ENCODE measurements at regions of chr5 and their contacts with region 1.

Region 1: DNA sequence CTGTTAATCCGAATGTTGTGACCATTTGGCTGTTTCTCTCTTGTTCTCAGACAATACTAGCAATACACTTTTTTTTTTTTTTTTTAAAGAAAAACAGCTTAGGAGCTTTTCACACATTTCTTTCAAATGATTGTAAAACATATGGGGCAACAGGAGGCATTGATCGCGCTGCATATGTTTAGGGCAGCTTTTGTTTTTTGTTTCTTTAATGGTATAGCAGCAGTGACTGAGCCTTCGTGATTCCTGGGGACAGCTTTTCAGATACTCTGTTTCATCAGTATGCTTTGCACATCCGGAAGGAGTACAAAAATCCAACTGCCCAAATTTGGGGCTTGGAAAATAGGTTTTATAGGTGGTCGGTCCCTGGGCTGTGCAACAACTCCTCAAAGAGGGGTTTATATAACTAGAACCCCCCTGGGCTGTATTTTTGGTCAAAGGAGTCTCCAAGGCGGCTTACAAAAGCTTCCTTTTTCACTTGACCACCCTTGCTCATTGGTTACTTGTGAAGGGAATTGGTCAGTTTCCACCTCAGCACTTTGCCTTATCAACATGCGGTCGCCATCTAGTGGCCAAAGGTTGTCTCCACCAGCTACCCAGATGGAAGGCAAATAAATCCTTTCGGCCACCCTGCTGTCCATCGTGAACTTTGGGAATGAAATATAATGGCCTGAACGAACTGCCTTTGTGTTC is 91.8 kb downstream of the PDE6A start:
- DNase-seq: peak; percentile 55
- ATAC-seq: peak; percentile 39
- H3K4me3 ChIP-seq: no peak overlapping the region
- H3K4me3 Mint-ChIP-seq: no peak overlapping the region
- H3K27ac ChIP-seq: no peak overlapping the region
- H3K27ac Mint-ChIP-seq: no peak overlapping the region
- H3K4me1 ChIP-seq: no peaks in the 10 kb centered on the region
- H3K4me1 Mint-ChIP-seq: no peaks in the 10 kb centered on the region
- H3K27me3 ChIP-seq: no peaks in the 10 kb centered on the region
- H3K27me3 Mint-ChIP-seq: no peaks in the 10 kb centered on the region
- CTCF ChIP-seq: peak; percentile 89

Region 2: GRCh38 chr5:149636851-149637246 is 215.9 kb before region 1 on chr5:
- CTCF ChIA-PET with region 1: interaction called, 131 read pairs
- POLR2A ChIA-PET with region 1: no interaction called
- intact Hi-C with region 1: loop called (anchors 1 kb)
- DNase-seq: peak; percentile 75
- ATAC-seq: peak; percentile 57
- H3K4me3 ChIP-seq: no peak overlapping the region
- H3K4me3 Mint-ChIP-seq: no peak overlapping the region
- H3K27ac ChIP-seq: no peak overlapping the region
- H3K27ac Mint-ChIP-seq: no peak overlapping the region
- H3K4me1 ChIP-seq: no peaks in the 10 kb centered on the region
- H3K4me1 Mint-ChIP-seq: peaks cover 6% of the 10 kb centered on the region
- H3K27me3 ChIP-seq: no peaks in the 10 kb centered on the region
- H3K27me3 Mint-ChIP-seq: no peaks in the 10 kb centered on the region
- CTCF ChIP-seq: peak; percentile 94

Region 3: GRCh38 chr5:149834246-149834855 is 18.4 kb before region 1 on chr5:
- CTCF ChIA-PET with region 1: interaction called, 240 read pairs
- POLR2A ChIA-PET with region 1: no interaction called
- intact Hi-C with region 1: loop called (anchors 1 kb)
- DNase-seq: peak; percentile 65
- ATAC-seq: no peak
- H3K4me3 ChIP-seq: no peak overlapping the region
- H3K4me3 Mint-ChIP-seq: no peak overlapping the region
- H3K27ac ChIP-seq: no peak overlapping the region
- H3K27ac Mint-ChIP-seq: no peak overlapping the region
- H3K4me1 ChIP-seq: no peaks in the 10 kb centered on the region
- H3K4me1 Mint-ChIP-seq: peaks cover 5% of the 10 kb centered on the region
- H3K27me3 ChIP-seq: no peaks in the 10 kb centered on the region
- H3K27me3 Mint-ChIP-seq: no peaks in the 10 kb centered on the region
- CTCF ChIP-seq: peak; percentile 63

Region 4: DNA sequence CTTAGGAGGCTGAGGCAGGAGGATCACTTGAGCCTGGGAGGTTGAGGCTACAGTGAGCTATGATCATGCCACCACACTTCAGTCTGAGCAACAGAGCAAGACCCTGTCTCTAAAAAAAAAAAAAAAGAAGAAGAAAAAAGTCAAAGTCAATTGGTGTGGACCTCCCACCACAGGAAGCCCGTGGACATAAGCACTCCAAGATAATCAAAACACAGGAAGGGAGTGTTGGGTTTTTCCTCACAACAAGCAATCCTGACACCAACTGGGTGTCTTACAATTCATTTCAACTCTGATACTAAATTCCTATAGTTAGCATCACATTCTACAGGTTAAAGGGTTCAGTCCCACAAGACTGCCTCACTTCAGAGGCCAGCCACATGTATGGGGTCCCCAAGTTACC is 21.1 kb after region 1 on chr5:
- CTCF ChIA-PET with region 1: interaction called, 12 read pairs
- POLR2A ChIA-PET with region 1: interaction called, 4 read pairs
- intact Hi-C with region 1: no loop called
- DNase-seq: no peak
- ATAC-seq: no peak
- H3K4me3 ChIP-seq: no peak overlapping the region
- H3K4me3 Mint-ChIP-seq: no peak overlapping the region
- H3K27ac ChIP-seq: no peak overlapping the region
- H3K27ac Mint-ChIP-seq: no peak overlapping the region
- H3K4me1 ChIP-seq: no peaks in the 10 kb centered on the region
- H3K4me1 Mint-ChIP-seq: no peaks in the 10 kb centered on the region
- H3K27me3 ChIP-seq: no peaks in the 10 kb centered on the region
- H3K27me3 Mint-ChIP-seq: no peaks in the 10 kb centered on the region
- CTCF ChIP-seq: no peak

Region 5: DNA sequence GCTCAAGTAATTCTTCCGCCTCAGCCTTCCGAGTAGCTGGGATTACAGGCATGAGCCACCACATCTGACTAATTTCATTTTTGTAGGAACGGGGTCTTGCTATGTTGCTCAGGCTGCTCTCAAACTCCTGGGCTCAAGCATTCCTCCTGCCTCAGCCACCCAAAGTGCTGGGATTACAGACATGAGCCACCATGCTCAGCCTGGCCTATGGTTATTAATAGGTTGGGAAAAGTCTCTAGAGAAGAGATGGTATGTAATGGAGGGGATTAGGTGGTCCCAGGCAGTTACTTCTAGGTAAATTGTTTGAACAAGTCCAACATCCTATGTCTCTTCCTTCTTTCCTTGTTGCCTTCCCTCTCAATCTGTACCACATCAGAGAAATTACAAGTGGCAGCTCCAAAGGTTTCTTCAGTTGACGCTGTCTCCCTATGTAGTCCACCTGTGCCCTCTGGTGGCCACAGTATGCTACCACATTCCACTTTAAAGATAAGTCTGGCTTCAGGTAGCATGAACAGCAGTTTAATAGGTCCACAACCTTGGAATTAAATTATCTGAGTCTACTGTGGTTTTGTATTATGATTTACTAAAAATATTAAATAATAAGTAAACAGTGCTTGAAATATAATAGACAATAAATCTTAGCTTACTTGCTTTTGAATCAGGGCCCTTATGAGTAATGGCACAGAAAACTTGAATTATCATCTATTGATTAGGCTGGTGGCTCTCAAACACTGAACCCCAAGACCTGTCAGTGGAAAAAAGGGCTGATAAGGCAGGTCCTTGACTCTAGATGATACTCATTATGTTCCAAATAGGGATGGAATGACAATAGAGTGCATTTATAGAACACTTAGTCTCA is 138.0 kb after region 1 on chr5:
- CTCF ChIA-PET with region 1: interaction called, 71 read pairs
- POLR2A ChIA-PET with region 1: no interaction called
- intact Hi-C with region 1: no loop called
- DNase-seq: peak; percentile 77
- ATAC-seq: peak; percentile 97
- H3K4me3 ChIP-seq: no peak overlapping the region
- H3K4me3 Mint-ChIP-seq: no peak overlapping the region
- H3K27ac ChIP-seq: no peak overlapping the region
- H3K27ac Mint-ChIP-seq: no peak overlapping the region
- H3K4me1 ChIP-seq: no peaks in the 10 kb centered on the region
- H3K4me1 Mint-ChIP-seq: no peaks in the 10 kb centered on the region
- H3K27me3 ChIP-seq: no peaks in the 10 kb centered on the region
- H3K27me3 Mint-ChIP-seq: no peaks in the 10 kb centered on the region
- CTCF ChIP-seq: peak; percentile 97

Measured in B cell (primary cell).